Heart right ventricle (tissue), 16 donors: ENCODE measurements at regions of chr9 and their contacts with region 1.

Region 1: DNA sequence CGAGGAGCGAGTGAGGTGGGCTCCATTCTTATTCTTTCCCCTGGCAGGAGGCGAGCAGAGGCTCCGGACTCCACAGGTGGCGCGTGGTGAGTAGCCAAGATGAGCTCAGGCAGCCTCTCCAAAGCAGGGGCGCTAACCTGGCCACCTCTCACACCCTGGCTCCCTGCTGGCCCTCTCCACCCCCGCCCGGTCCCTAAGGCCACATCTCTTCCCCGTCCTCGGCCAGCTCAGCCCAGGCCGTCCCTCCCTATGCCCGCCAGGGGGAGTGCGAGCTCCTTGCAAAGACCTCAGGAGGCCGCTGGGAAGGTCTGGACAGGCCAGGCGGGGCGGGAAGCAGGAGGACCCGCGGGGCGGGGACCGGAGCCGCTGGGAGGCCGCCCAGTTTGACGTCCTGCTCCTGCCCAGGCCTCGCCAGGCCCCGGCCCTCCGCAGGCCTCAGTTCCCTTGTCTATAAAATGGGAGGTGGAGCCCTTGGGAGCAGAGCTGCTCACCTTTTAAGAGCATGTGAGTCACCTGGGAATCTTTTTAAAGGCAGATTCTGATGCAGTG is 46.3 kb upstream of the GGTA1 start:
- DNase-seq: peak; percentile 97
- ATAC-seq: peak; percentile 90 to 95 (median 94)
- H3K4me3 ChIP-seq: peak overlapping the region in 6 of 10 donors; percentile 17 to 39 (median 28)
- H3K27ac ChIP-seq: peak overlapping the region in 5 of 10 donors; percentile 26 to 54 (median 47)
- H3K4me1 ChIP-seq: peaks cover 5 to 27% (median 20%) of the 10 kb centered on the region in 9 donors
- H3K27me3 ChIP-seq: peaks cover 0 to 5% (median 0%) of the 10 kb centered on the region in 7 donors
- CTCF ChIP-seq: peak; percentile 95 to 99 (median 96)

Region 2: DNA sequence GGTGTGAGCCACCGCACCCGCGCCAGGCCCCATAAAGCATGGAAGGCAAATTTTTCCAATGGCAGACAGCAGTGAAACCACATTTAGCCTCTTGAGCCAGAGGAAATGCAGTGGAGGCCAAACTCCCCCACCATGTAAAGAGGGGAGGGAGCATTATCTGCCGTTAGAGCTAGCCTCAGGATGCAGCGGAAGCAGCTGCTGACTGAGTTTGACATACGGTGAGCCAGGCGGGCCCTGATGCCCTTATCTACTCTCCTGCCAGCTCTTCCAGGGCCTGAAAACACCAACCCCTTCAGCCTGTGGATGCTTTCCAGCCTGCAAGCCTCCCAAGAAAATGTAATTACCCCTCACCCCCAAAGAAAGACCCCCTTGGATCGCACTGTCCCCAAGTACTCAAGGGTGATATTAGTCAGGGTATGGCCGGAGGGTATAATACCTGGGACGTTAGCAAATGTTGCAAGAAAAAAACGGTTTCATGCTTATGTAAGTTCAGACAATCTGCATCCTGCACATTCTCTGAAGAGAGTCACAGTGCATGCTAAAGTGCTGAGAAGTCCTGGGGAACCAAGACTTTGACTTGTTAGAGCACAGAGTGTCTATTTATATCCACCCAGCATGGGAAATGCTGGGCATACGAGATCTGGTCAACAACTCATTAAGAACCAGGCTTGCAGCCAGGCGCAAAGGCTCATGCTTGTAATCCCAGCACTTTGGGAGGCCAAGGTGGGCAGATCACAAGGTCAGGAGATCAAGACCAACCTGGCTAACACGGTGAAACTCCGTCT is 35.0 kb before region 1 on chr9:
- intact Hi-C with region 1: no loop called
- DNase-seq: peak; percentile 35 to 53
- ATAC-seq: peak; percentile 67 to 91 (median 84)
- H3K4me3 ChIP-seq: no peak overlapping the region
- H3K27ac ChIP-seq: peak overlapping the region in 9 of 10 donors; percentile 2 to 74 (median 61)
- H3K4me1 ChIP-seq: peaks cover 0 to 33% (median 21%) of the 10 kb centered on the region in 9 donors
- H3K27me3 ChIP-seq: no peaks in the 10 kb centered on the region
- CTCF ChIP-seq: no peak

Region 3: GRCh38 chr9:121609845-121610570 is 64.1 kb after region 1 on chr9:
- intact Hi-C with region 1: loop called in 1 of 10 experiments (anchors 5 kb)
- DNase-seq: peak; percentile 54 to 57
- ATAC-seq: peak; percentile 16 to 75 (median 48)
- H3K4me3 ChIP-seq: no peak overlapping the region
- H3K27ac ChIP-seq: peak overlapping the region in 9 of 10 donors; percentile 59 to 93 (median 83)
- H3K4me1 ChIP-seq: peaks cover 30 to 94% (median 84%) of the 10 kb centered on the region in 9 donors
- H3K27me3 ChIP-seq: peaks cover 0 to 5% (median 0%) of the 10 kb centered on the region in 7 donors
- CTCF ChIP-seq: peak in 1 of 9 donors; percentile 16

Region 4: DNA sequence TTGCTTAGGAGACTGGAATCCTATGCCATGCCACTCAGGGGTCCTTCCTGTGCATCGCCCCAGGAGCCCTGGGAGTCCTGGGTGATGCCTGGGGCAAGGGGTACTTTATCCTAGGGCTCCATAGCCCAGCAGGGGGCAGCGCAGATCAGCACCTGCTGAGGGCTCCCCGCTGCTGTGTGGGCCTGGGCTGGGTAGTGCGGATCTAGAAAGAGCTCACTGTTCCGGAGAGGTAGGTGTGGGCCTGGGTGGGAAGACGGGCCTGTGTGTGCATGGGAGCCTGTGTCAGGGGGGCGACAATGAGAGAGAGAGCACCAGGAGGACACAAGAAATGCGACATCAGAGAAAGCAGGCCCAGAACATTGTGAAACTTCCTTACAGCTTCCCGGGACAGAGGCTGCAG is 94.1 kb after region 1 on chr9:
- intact Hi-C with region 1: loop called in 2 of 10 experiments (anchors 5 kb)
- DNase-seq: peak; percentile 70 to 73
- ATAC-seq: peak; percentile 52 to 84 (median 74)
- H3K4me3 ChIP-seq: no peak overlapping the region
- H3K27ac ChIP-seq: peak overlapping the region in 9 of 10 donors; percentile 32 to 79 (median 47)
- H3K4me1 ChIP-seq: peaks cover 16 to 90% (median 61%) of the 10 kb centered on the region in 9 donors
- H3K27me3 ChIP-seq: no peaks in the 10 kb centered on the region
- CTCF ChIP-seq: peak; percentile 53 to 76 (median 68)

Region 5: DNA sequence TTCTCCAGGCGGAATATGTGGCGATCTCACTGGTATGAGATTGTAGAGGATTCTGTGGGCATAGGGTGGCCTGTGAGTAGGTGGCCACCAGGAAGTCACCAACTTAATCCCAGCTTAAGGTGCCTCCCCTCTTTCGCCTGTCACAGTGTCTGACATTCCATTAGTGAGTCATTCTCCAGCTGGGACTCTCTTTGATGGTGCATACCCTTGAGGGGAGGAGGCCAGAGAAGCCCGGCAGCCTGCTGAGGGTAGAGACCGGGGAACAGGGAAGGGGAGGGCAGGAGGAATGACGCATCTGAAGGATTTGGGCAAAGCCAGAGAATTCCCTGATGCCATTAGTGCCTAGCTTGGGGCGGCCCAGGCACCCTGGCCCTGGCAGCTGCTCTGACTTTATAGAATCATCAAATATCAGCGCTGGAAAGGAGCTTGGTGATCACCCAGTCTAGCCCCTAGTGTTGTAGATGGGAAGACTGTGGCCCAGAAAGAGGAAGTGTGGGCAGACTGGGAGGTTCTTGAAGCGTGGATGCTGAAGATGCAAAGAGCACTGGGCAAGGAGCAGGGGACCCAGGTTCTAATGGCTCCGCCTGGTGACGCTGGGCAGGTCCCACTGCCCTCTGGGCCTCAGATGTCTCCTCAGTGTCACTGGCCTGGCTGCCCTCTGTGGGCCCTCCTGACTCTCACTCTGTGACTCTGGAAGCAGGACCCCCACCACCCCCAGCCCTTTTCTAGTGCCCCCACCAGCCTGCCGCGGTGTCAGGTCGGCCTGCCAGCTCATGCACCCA is 146.8 kb after region 1 on chr9:
- intact Hi-C with region 1: loop called in 6 of 10 experiments (anchors 5 to 10 kb)
- DNase-seq: no peak
- ATAC-seq: peak; percentile 32 to 90 (median 56)
- H3K4me3 ChIP-seq: no peak overlapping the region
- H3K27ac ChIP-seq: peak overlapping the region in 8 of 10 donors; percentile 32 to 65 (median 48)
- H3K4me1 ChIP-seq: peaks cover 16 to 54% (median 36%) of the 10 kb centered on the region in 9 donors
- H3K27me3 ChIP-seq: peaks cover 0 to 17% (median 0%) of the 10 kb centered on the region in 7 donors
- CTCF ChIP-seq: no peak

Region 6: GRCh38 chr9:121783521-121784507 is 237.9 kb after region 1 on chr9:
- intact Hi-C with region 1: no loop called
- DNase-seq: peak in 1 of 2 donors; percentile 4
- ATAC-seq: no peak
- H3K4me3 ChIP-seq: no peak overlapping the region
- H3K27ac ChIP-seq: no peak overlapping the region
- H3K4me1 ChIP-seq: peaks cover 2 to 45% (median 25%) of the 10 kb centered on the region in 9 donors
- H3K27me3 ChIP-seq: no peaks in the 10 kb centered on the region
- CTCF ChIP-seq: no peak

Region 7: DNA sequence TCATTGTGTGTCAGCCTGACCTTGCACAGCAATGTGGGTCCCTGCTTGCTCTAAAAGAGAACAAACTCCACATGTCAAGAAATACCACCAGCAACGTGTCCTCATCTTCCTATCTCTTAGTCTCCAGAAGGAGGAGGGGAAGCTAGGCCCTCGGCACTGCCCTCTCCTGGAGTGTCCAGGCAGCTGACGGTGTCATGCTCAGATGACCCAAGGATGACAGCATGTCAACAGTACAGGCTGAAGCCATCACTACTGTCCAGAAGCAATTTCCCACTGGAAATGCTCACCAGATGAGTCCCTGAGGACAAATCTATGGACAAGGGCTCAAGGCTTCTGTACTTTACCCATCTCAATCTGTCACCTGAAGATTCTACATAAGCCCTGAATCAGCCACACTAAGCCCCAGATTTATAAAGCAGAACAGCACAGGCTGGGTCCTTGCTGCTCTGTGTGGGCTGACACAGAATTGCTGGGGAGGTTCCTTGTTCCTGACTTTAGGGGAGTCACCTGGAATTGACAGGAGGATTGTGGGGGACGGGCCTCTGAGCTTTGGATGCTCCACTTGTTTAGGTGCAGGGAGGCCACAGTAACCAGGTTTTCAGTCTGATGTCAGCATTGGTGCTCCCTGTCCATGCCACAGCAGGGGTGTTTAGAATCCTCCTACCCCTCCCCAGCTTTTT is 315.7 kb after region 1 on chr9:
- intact Hi-C with region 1: loop called in 3 of 10 experiments (anchors 5 to 10 kb)
- DNase-seq: peak; percentile 49 to 50
- ATAC-seq: peak in 7 of 8 donors; percentile 77 to 93 (median 79)
- H3K4me3 ChIP-seq: no peak overlapping the region
- H3K27ac ChIP-seq: no peak overlapping the region
- H3K4me1 ChIP-seq: peaks cover 0 to 20% (median 13%) of the 10 kb centered on the region in 9 donors
- H3K27me3 ChIP-seq: no peaks in the 10 kb centered on the region
- CTCF ChIP-seq: peak; percentile 27 to 74 (median 64)